Dorsolateral prefrontal cortex (tissue), 120 donors: ENCODE measurements at regions of chr9 and their contacts with region 1.

Region 1: GRCh38 chr9:126398403-126399058 is 71.9 kb downstream of the MVB12B start:
- DNase-seq: peak; percentile 80 to 92 (median 86)
- H3K4me3 ChIP-seq: peak overlapping the region in 1 of 59 donors; percentile 7
- H3K27ac ChIP-seq: peak overlapping the region in 57 of 59 donors; percentile 19 to 99 (median 81)
- H3K27me3 ChIP-seq: no peaks in the 10 kb centered on the region
- CTCF ChIP-seq: peak; percentile 86 to 99 (median 98)

Region 2: DNA sequence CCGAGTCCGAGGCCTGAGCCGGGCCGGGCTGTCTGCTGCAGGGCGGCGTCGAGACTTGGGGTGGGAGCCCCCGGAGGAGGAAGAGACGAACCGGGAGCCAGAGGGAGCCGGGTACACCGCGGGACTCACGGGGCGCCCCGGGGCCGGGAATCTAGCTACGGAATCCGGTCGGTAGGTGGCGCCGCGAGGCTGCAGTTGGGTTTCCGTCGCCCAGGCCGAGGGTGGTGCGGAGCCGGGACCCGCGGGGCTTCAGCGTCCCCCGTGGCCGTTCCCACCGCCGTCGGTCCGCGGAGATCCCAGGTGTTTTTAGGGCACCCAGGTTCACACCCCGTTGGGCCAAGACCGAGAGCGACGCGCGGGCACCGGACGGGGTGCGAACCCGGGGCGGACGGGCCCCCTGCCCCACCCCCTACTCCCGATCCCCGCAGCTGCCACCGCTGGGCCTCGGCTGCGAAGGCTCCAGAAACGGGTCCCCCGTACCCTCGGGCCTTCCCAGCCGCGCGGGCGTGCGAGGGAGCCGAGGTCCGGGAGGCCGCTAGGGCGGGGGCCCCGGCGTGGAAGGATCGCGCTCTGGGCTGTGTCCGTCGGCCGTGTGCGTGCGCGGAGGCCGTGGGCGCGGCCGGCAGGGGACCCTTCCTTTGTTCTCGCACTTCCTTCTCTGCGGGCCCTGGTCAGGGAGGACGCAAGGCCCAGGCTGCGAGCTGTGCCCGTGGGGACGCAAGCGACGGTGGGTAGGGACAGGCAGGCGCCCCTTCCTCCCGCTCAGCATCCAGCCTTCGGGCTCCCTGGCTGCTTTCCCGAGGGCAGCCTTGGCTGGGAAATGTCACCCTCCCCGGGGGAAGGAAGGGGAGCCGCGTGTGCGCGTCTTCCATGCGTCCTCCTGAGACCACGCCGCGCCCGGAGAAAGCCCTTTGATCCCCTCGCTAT is 990.3 kb before region 1 on chr9:
- intact Hi-C with region 1: loop called in 1 of 2 experiments (anchors 2 kb)
- DNase-seq: peak; percentile 59 to 81 (median 74)
- H3K4me3 ChIP-seq: peak overlapping the region; percentile 43 to 82 (median 66)
- H3K27ac ChIP-seq: peak overlapping the region in 2 of 59 donors; percentile 31 to 53
- H3K27me3 ChIP-seq: peaks cover 0 to 10% (median 0%) of the 10 kb centered on the region in 45 donors
- CTCF ChIP-seq: peak; percentile 45 to 98 (median 89)

Region 3: DNA sequence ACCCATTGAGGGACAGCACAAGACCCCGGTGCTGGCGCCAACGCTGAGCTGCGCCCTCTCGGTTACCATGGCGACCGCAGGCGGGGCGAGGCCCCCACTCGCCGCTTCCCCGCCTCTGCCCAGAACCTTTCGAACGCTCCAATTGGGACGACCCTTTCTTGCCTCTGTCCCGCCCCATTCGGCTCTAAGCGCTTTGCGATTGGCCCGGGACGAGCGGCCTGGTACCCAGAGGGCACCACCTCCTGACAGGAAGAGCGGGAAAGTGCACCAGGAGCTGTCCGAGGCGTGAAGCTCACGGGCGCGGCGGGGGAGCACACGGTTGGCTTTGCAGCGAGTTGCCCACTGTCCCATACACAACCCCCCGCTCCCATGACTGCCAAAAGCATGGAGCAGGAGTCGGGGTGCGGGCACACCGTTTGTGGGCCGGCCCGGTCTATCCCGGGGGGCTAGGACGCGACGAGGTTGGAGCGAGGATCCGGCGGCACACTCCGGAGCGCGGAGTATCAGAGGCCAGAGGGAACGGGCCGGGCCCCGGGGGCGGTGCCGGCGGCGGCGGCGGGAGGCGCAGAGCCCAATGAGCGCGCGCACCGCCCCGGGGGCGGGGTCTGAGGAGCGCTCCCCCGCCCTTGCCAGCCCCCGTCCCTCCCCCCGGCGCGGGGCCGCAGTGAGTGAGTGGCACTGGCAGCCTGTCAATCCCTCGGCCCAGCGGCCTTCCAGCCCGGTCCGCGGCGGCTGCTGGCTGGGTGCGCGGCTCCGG is 652.3 kb before region 1 on chr9:
- intact Hi-C with region 1: loop called in 1 of 2 experiments (anchors 10 kb)
- DNase-seq: peak; percentile 90 to 96 (median 94)
- H3K4me3 ChIP-seq: peak overlapping the region; percentile 47 to 89 (median 76)
- H3K27ac ChIP-seq: peak overlapping the region in 57 of 59 donors; percentile 34 to 94 (median 87)
- H3K27me3 ChIP-seq: no peaks in the 10 kb centered on the region
- CTCF ChIP-seq: peak in 21 of 56 donors; percentile 3 to 45 (median 15)

Region 4: GRCh38 chr9:126146254-126147145 is 252.0 kb before region 1 on chr9:
- intact Hi-C with region 1: loop called in 1 of 2 experiments (anchors 10 kb)
- DNase-seq: peak in 3 of 10 donors; percentile 26 to 40 (median 26)
- H3K4me3 ChIP-seq: no peak overlapping the region
- H3K27ac ChIP-seq: no peak overlapping the region
- H3K27me3 ChIP-seq: peaks cover 0 to 5% (median 0%) of the 10 kb centered on the region in 45 donors
- CTCF ChIP-seq: peak in 37 of 56 donors; percentile 12 to 51 (median 30)

Region 5: GRCh38 chr9:126326228-126327005 is 72.1 kb before region 1 on chr9 and contains the start of gene MVB12B:
- intact Hi-C with region 1: loop called in 1 of 2 experiments (anchors 5 kb)
- DNase-seq: peak in 2 of 10 donors; percentile 39 to 70
- H3K4me3 ChIP-seq: peak within 1 kb of the TSS; percentile 39 to 87 (median 77)
- H3K27ac ChIP-seq: peak within 1 kb of the TSS; percentile 76 to 99 (median 96)
- H3K27me3 ChIP-seq: no peaks in the 10 kb centered on the region
- CTCF ChIP-seq: no peak
- total RNA-seq, gene MVB12B: 43.4 to 233 (median 75.7) TPM

Region 6: GRCh38 chr9:126490871-126491567 is 92.5 kb after region 1 on chr9:
- intact Hi-C with region 1: loop called (anchors 2 to 5 kb)
- DNase-seq: peak in 3 of 10 donors; percentile 69 to 72 (median 70)
- H3K4me3 ChIP-seq: peak overlapping the region in 47 of 59 donors; percentile 2 to 54 (median 31)
- H3K27ac ChIP-seq: peak overlapping the region in 58 of 59 donors; percentile 38 to 92 (median 82)
- H3K27me3 ChIP-seq: no peaks in the 10 kb centered on the region
- CTCF ChIP-seq: peak; percentile 89 to 99 (median 96)